ENCODE measurements at regions of chr2 and their contacts with region 1.

Region 1: GRCh38 chr2:222561817-222562645 is 93.9 kb downstream of the FARSB start:
- DNase-seq: peak in 1 of 9 donors; percentile 5
- ATAC-seq: peak; percentile 52
- H3K4me3 ChIP-seq: no peak overlapping the region
- H3K4me3 Mint-ChIP-seq: no peak overlapping the region
- H3K27ac ChIP-seq: no peak overlapping the region
- H3K27ac Mint-ChIP-seq: no peak overlapping the region
- H3K4me1 ChIP-seq: no peaks in the 10 kb centered on the region
- H3K4me1 Mint-ChIP-seq: peaks cover 0 to 2% (median 0%) of the 10 kb centered on the region in 7 donors
- H3K27me3 ChIP-seq: no peaks in the 10 kb centered on the region
- H3K27me3 Mint-ChIP-seq: peaks cover 0 to 2% (median 0%) of the 10 kb centered on the region in 5 donors

Region 2: DNA sequence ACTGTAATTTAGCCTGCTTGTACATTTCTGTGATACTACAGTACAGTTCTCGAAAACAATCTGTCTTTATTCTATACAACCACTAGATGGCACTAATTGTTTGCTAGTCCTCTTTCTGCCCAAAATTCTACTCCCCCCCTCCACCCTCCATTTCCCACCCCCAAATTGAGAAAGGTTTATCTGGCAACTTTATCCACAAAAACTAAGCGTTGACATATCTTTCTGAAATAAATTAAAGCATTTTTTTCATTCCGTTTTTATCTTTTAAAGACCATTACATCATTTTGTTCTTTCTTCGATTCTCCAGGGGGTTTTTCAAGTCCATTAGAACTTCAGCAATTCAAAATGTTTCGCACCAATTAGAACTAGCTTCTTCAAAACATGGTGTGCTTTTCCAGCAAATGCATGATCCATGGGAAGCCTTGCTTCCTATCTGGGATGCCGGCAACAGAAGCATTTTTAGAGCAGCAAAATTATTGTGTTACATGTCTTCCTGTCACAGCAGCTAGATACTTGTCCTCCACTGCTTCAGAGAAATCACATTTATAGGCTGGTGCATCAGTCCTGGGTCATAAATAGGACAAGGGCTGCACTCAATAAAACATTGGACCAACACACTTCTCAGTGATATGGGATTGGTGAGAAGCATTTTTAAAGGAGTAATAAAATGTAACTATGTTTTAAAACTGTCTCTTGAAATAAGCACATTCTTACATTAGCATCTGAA is 504.5 kb before region 1 on chr2:
- CTCF ChIA-PET with region 1: no interaction called
- POLR2A ChIA-PET with region 1: no interaction called
- intact Hi-C with region 1: loop called in 1 of 2 experiments (anchors 5 kb)
- DNase-seq: no peak
- ATAC-seq: no peak
- H3K4me3 ChIP-seq: no peak overlapping the region
- H3K4me3 Mint-ChIP-seq: no peak overlapping the region
- H3K27ac ChIP-seq: no peak overlapping the region
- H3K27ac Mint-ChIP-seq: no peak overlapping the region
- H3K4me1 ChIP-seq: no peaks in the 10 kb centered on the region
- H3K4me1 Mint-ChIP-seq: no peaks in the 10 kb centered on the region
- H3K27me3 ChIP-seq: no peaks in the 10 kb centered on the region
- H3K27me3 Mint-ChIP-seq: peaks cover 28 to 40% (median 33%) of the 10 kb centered on the region in 5 donors

Region 3: DNA sequence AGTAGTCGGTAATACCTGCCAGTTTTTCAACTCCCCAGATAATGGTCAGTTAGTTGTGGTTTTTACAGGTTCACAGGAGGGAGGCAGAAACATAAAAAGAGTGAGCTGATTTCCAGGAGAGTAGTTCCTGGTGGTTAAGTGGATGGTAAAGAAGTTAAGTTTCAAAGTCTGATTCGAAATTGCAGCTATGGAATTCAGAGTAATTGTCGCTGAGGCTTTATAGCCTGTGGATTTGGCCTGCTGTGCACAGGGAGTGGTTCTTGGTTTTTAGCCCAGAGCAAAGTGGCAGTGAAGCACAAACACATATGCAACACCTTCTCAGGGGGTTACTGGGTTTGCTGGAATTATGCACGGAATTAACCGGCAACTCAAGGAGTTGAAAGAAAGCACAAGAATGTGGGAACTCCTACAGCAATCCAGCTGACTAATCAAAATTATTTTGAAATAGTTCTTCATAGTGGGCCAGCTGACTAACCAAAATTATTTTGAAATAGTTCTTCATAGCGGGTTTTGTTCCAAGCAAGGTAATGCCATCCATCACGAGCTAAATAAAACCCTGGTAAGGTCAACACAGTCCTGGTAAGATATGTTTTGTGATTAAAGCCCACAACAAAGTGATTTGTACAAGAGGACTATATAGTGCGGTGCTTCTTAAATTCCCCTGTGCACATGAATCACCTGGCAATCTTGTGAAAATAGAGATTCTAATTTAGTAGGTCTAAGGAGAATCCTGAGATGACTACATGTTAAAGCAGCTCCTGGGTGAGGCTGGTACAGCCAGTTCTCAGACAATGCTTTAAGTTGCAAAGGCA is 43.3 kb before region 1 on chr2:
- CTCF ChIA-PET with region 1: no interaction called
- POLR2A ChIA-PET with region 1: no interaction called
- intact Hi-C with region 1: no loop called
- DNase-seq: no peak
- ATAC-seq: no peak
- H3K4me3 ChIP-seq: no peak overlapping the region
- H3K4me3 Mint-ChIP-seq: no peak overlapping the region
- H3K27ac ChIP-seq: no peak overlapping the region
- H3K27ac Mint-ChIP-seq: no peak overlapping the region
- H3K4me1 ChIP-seq: no peaks in the 10 kb centered on the region
- H3K4me1 Mint-ChIP-seq: no peaks in the 10 kb centered on the region
- H3K27me3 ChIP-seq: no peaks in the 10 kb centered on the region
- H3K27me3 Mint-ChIP-seq: peaks cover 3 to 28% (median 11%) of the 10 kb centered on the region in 5 donors